Activated naive CD4-positive, alpha-beta T cell treated with anti-CD3 and anti-CD28 coated beads for 36 hours (primary cell): ENCODE measurements at regions of chr11 and their contacts with region 1.

Region 1: DNA sequence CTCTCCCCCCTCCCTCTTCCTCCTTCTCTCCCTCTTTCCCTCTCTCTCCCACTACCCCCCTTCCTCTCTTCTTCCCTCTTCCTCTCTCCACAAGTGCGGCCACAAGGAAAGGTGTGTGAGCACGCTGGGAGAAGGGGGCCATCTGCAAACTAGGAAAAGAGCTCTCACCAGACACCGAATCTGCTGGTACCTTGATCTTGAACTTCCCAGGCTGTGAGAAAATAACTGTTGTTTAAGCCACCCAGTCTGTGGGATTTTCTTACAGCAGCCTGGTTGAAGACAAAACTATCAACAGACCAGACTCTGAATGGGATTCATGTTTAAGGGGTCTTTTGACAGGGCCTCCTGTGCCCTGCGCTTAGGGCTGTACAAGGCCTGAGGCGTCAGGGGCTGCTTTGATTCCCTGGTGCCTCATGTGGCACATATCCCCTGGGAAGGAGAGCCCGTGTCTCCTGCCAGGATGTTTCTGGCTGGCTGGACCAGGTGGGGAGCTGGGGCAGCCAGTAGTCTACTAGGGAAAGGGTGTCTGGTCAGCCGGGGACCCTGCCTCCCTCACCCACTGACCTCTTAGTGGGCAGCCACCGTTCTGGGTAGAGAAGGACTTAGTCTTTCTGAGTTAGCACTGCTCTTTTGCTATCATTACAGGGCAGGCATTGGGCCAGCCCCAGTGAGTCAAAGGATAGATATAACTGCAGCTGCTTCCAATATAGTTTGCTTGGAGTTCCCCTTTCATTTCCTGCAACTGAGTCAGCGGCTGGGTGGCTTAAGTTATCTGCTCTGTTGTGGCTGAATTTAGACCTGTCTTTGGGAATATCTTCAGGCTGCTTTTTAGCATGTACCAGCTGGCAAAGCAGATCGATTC is 6.2 kb downstream of the PANX1 start:
- DNase-seq: peak; percentile 78
- H3K4me3 Mint-ChIP-seq: no peak overlapping the region
- H3K27ac Mint-ChIP-seq: peak overlapping the region; percentile 22
- H3K4me1 Mint-ChIP-seq: peaks cover 40% of the 10 kb centered on the region
- H3K27me3 Mint-ChIP-seq: no peaks in the 10 kb centered on the region

Region 2: GRCh38 chr11:94151903-94152677 is 17.2 kb after region 1 on chr11:
- CTCF ChIA-PET with region 1: interaction called, 4 read pairs
- intact Hi-C with region 1: loop called (anchors 1 kb)
- DNase-seq: peak; percentile 62
- H3K4me3 Mint-ChIP-seq: no peak overlapping the region
- H3K27ac Mint-ChIP-seq: no peak overlapping the region
- H3K4me1 Mint-ChIP-seq: peaks cover 59% of the 10 kb centered on the region
- H3K27me3 Mint-ChIP-seq: no peaks in the 10 kb centered on the region